ENCODE measurements at regions of chr6 and their contacts with region 1.

Region 1: DNA sequence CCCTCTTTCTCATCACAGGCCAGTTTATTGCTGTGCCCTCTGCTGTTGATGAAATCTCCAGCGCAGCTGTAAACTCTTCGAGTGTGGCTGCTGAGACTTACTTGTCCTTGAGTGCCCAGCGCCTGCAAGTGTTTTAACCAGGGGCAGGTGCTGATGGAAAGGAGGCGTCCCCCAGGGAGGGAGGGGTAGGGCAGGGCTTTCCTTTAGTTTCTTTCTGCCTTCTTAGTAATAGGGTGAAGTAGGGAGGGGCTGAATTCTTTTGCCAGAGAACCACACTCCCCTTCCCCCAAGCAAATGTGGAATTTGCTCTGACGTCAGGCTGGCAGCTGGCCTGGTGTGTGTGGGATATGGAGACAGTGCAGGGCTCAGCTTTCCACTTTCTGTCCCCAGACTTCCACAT is 61.2 kb downstream of the IGF2R start:
- DNase-seq: peak; percentile 92 to 95
- ATAC-seq: peak; percentile 88 to 92 (median 90)
- H3K4me3 ChIP-seq: no peak overlapping the region
- H3K27ac ChIP-seq: peak overlapping the region; percentile 80
- H3K4me1 ChIP-seq: peaks cover 48% of the 10 kb centered on the region
- H3K27me3 ChIP-seq: no peaks in the 10 kb centered on the region
- CTCF ChIP-seq: no peak

Region 2: DNA sequence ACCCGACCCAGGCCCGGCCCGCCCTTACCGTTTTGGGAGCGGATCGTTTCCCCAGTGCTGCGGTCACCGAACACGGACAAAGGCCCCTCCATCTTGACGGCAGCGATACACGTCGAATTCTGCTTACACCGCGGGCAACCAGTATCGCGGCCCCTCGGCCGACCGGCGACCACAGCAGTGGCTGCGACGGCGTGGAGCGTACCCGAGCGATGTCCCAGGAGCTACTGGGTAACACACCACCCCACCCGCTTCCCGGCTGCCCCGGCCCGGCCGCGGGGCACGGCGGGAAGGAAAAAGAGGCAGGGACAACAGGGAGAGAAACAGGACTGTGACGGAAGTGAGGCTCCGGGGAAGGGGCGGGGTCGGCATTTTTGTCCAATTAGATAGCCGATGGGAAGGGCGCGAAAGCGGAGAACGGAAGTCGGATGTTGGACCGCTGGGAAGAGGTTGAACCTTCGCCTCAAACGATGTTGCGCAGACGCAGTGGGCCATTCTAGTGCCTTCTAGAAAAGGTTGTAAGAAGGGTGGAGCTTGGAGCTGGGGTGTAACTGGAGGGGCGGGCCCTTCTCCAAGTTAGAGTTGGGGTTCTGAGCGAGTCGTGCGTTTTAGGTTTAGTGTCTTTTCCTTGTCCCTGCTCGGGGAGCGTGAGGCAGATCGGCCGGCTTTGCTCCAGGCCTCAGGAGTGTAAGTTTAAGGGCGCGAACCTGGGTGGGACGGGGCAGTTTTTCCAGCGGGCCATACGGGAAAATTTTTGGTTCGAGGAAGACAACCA is 240.5 kb before region 1 on chr6 and contains the start of gene TCP1:
- intact Hi-C with region 1: loop called in 1 of 2 experiments (anchors 10 kb)
- DNase-seq: peak; percentile 99 to 100
- ATAC-seq: peak; percentile 88 to 90 (median 88)
- H3K4me3 ChIP-seq: peak within 1 kb of the TSS; percentile 96
- H3K27ac ChIP-seq: peak within 1 kb of the TSS; percentile 93
- H3K4me1 ChIP-seq: peaks cover 32% of the 10 kb centered on the region
- H3K27me3 ChIP-seq: no peaks in the 10 kb centered on the region
- CTCF ChIP-seq: no peak
- total RNA-seq, gene TCP1: 156 to 228 (median 193) TPM

Region 3: DNA sequence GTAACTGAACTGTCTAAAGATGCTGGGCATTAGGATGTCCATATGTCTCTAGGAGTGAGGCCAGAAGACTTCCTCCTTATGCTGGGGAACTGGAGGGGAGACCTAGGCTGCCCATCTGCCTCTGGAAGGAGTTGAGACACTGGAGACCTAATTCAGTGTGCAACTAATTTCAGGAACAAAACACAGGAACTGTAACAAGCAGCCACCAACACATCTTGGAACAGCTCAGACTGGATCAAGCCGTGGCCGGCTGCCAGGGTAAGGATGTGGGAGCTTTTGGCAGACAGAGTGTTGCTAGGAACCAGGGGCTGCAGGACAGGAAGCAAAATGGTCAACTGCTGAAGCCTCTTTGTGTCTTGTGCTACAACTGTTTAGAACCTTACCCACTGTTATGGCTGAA is 155.7 kb before region 1 on chr6:
- intact Hi-C with region 1: loop called in 1 of 2 experiments (anchors 10 kb)
- DNase-seq: no peak
- ATAC-seq: no peak
- H3K4me3 ChIP-seq: no peak overlapping the region
- H3K27ac ChIP-seq: no peak overlapping the region
- H3K4me1 ChIP-seq: no peaks in the 10 kb centered on the region
- H3K27me3 ChIP-seq: no peaks in the 10 kb centered on the region
- CTCF ChIP-seq: no peak

Region 4: DNA sequence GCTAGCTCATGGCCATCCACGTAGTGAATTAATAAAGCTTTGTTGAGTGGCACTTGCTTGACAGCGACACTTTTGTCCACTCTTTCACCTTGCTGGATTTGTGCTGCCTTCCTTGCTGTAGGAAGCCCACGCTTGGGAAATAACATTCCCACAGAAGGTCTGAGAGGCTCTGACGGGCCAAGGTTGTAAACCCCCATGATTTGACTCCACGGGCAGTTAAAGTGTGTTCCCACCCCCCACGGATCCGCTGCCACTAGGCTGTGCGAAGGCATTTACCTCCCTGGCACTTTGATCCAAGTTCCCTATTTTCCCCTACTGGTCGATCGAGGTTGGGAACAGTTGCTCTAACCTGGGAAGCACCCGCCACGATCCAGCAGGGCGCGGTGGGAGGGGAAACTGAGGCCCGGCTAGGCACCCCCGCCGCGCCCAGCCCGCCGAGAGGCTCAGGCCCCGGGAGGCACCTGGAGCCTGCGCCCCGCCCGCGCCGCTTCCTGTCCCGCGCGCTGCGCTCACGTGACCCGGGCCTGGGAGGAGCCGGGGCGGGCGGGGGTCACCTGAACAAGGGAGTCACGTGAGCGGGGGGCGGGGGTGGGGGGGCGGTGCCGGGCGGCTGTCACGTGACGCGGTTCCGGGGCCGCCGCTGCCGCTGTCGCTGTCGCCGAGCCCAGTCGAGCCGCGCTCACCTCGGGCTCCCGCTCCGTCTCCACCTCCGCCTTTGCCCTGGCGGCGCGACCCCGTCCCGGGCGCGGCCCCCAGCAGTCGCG is 61.5 kb before region 1 on chr6 and contains the start of gene IGF2R:
- intact Hi-C with region 1: loop called in 1 of 2 experiments (anchors 1 kb)
- DNase-seq: peak; percentile 96 to 97
- ATAC-seq: peak; percentile 90 to 94 (median 91)
- H3K4me3 ChIP-seq: peak within 1 kb of the TSS; percentile 89
- H3K27ac ChIP-seq: peak within 1 kb of the TSS; percentile 97
- H3K4me1 ChIP-seq: peaks cover 41% of the 10 kb centered on the region
- H3K27me3 ChIP-seq: no peaks in the 10 kb centered on the region
- CTCF ChIP-seq: no peak
- total RNA-seq, gene IGF2R: 113 to 167 (median 157) TPM

Region 5: DNA sequence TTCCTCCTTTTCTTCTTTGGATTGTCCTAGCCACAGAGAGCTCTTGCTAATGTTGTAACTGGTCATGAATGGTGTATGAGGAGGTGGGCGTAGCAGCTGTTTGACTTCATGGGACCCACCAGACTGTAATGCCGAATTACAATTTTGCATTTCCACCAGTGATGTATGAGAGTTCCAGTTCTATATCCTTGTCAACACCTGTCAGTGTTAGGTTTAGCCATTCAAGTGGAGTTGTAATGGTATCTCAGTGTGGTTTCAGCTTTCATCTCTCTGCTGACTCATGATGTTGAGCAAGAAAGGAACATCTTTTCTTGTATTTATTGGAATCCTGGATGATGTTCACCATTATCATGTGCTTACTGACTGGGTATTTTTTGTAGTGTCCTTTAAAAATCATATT is 56.2 kb before region 1 on chr6:
- intact Hi-C with region 1: loop called in 1 of 2 experiments (anchors 2 kb)
- DNase-seq: no peak
- ATAC-seq: peak; percentile 58 to 72 (median 66)
- H3K4me3 ChIP-seq: peak overlapping the region; percentile 12
- H3K27ac ChIP-seq: peak overlapping the region; percentile 97
- H3K4me1 ChIP-seq: peaks cover 86% of the 10 kb centered on the region
- H3K27me3 ChIP-seq: no peaks in the 10 kb centered on the region
- CTCF ChIP-seq: no peak

Region 6: DNA sequence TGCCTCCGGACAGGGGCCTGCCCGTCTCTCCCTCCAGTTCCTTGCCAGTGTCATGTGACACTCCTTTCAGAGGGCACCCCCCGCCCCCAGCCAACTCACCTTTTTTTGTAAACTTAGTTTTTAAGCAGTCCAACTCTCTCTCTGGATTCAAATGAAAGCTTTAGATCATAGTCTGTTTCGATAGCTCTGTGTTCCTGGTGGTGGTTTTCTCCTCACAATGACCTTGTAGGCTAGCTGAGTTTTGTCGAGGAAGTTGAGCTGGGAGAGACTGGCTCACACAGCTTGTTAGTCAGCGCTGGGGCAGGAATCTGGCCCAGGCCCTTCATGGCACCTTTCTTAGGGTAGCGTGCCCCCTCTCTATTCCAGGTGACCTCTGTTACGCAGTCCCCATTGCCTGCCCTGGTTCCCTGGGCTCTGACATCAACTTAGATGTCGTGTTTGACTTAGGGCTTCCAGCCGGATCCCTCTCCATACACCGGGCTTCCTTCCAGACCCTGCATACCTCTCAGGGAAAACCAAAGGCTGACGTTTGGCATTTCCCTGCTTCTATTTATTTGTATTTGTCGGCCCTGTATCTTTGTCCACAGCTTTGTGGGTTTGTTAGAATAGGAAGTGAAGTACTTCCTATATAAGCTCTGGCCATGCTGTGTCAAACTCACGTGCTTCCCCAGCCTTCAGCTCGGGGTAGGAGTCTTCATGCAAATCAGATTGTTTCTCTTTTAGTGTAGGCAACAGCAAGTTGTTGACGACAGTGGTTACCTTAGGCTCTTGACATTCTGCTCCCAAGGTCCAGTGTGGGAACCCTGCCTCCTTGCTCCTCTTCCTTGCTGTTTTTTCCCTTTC is 48.5 kb before region 1 on chr6:
- intact Hi-C with region 1: loop called in 1 of 2 experiments (anchors 5 kb)
- DNase-seq: peak; percentile 27 to 58
- ATAC-seq: peak; percentile 15 to 43 (median 28)
- H3K4me3 ChIP-seq: peak overlapping the region; percentile 39
- H3K27ac ChIP-seq: peak overlapping the region; percentile 90
- H3K4me1 ChIP-seq: peaks cover 93% of the 10 kb centered on the region
- H3K27me3 ChIP-seq: no peaks in the 10 kb centered on the region
- CTCF ChIP-seq: no peak